ENCODE measurements at regions of chr17 and their contacts with region 1.

Region 1: GRCh38 chr17:55527540-55528118 is 16.4 kb upstream of the SMIM36 start:
- DNase-seq: no peak
- ATAC-seq: peak; percentile 87

Region 2: DNA sequence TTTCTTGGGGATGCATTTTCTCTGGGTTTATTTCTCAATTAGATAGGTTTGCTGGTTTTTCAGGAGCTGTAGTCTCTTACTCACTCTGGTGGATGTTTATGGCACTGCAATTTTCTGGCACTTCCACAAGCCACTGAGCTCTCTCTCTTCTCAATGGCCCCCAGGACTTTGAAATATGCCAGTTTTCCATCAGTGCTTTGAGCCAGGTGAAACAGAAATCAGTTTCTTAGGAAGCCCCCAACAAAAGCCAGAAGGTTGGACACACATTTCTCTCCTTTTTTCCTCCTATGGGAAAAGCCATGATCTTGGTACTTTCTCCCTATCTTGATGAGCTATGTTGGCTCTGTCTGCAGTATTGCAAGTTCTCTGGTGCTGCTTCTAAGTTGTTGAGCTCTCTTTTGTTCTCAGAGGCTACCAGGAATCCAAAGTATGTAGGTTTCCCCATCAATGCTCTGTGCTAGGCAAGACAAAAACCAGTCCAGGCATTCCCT is 74.3 kb after region 1 on chr17:
- intact Hi-C with region 1: loop called (anchors 5 kb)
- DNase-seq: no peak
- ATAC-seq: no peak

Region 3: GRCh38 chr17:55641676-55642081 is 114.0 kb after region 1 on chr17:
- intact Hi-C with region 1: loop called (anchors 5 kb)
- DNase-seq: peak; percentile 74
- ATAC-seq: peak; percentile 81

Region 4: DNA sequence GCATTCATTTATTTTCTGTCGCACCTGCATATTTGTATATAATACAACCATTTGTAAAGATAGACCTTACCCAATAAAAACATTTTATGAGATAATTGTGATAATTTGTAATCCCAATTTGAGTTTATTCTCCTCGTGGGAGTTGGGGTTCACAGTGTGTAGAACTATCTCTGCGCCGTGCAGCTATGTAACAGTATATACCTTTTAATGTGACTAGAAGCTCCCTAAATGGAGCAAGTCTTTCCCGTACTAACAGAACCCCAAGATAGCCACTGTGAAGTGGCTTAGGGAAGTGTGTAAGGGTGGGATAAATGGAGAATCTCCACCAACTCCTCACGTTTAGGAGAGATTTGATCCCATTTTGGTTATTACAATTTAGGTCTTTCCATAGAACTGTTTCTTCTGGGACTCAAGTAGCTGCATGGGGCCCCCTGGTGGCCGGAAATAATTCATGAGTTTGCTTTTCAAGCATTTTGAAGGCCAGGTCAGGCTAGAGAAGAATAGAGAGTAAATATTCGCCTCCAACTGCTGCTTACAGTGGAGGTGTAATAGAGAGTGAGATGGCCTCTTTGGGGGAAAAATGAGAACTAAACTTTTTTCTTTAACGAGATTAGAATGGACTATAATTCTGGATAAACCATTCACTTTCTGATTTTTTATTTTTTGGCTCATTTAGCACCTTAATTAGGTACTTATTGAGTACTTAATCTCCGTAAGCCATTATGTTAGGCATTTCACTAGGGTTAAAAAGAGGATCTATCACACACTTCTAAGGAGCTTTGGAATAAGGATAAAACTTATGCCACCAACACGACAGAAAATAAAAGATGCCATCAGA is 190.5 kb after region 1 on chr17:
- intact Hi-C with region 1: loop called (anchors 5 kb)
- DNase-seq: peak; percentile 85
- ATAC-seq: peak; percentile 66

Region 5: GRCh38 chr17:55769623-55770000 is 242.0 kb after region 1 on chr17:
- intact Hi-C with region 1: loop called (anchors 1 kb)
- DNase-seq: no peak
- ATAC-seq: peak; percentile 51

Region 6: DNA sequence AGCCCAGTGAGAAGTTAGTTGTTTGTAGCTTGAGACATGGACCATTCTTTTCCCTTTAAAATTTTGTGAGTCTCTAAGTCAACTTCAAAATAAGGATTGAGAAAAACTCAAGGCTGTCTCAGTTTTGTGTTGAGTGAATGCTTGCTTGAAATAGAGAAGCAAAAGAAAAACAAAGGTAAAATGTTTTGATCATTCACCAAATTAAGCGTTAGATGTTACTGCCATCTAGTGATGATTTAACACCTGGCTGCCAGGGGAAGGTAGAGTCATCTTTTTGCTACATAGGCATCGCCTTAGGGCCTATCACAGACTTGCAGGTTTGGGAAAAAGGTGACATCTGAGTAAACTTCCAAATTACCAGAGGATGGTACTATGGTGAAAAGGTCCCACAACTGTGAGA is 297.6 kb after region 1 on chr17:
- intact Hi-C with region 1: loop called (anchors 2 kb)
- DNase-seq: no peak
- ATAC-seq: no peak

Measured in Right ventricle myocardium superior (tissue), 1 donor.